HepG2 (cell line): ENCODE measurements at regions of chr12 and their contacts with region 1.

Region 1: GRCh38 chr12:6451348-6452244 is at the start of gene TAPBPL:
- DNase-seq: peak; percentile 89
- ATAC-seq: peak; percentile 94
- H3K4me3 ChIP-seq: peak within 1 kb of the TSS; percentile 87 to 94 (median 90)
- H3K27ac ChIP-seq: peak within 1 kb of the TSS; percentile 90
- H3K4me1 ChIP-seq: peaks cover 34% of the 10 kb centered on the region
- H3K27me3 ChIP-seq: no peaks in the 10 kb centered on the region; a peak in 1 of 5 replicates
- CTCF ChIP-seq: no peak
- EP300 ChIP-seq: no peak
- POLR2A ChIP-seq: peak; percentile 68 to 79
- RAD21 ChIP-seq: no peak
- total RNA-seq, gene TAPBPL: 3.2 and 10.0 TPM in 2 replicates

Region 2: GRCh38 chr12:6440391-6440790 is 11.2 kb before region 1 on chr12:
- CTCF ChIA-PET with region 1: no interaction called
- POLR2A ChIA-PET with region 1: interaction called, 13 read pairs
- in situ Hi-C with region 1: no loop called
- intact Hi-C with region 1: no loop called
- DNase-seq: no peak
- ATAC-seq: no peak
- H3K4me3 ChIP-seq: no peak overlapping the region
- H3K27ac ChIP-seq: no peak overlapping the region
- H3K4me1 ChIP-seq: peaks cover 15% of the 10 kb centered on the region
- H3K27me3 ChIP-seq: no peaks in the 10 kb centered on the region; a peak in 2 of 5 replicates
- CTCF ChIP-seq: no peak
- EP300 ChIP-seq: no peak
- POLR2A ChIP-seq: no peak
- RAD21 ChIP-seq: no peak

Region 3: GRCh38 chr12:6461401-6462233 is 10.0 kb after region 1 on chr12:
- CTCF ChIA-PET with region 1: no interaction called
- POLR2A ChIA-PET with region 1: interaction called, 12 read pairs
- in situ Hi-C with region 1: no loop called
- intact Hi-C with region 1: no loop called
- DNase-seq: no peak
- ATAC-seq: no peak
- H3K4me3 ChIP-seq: no peak overlapping the region
- H3K27ac ChIP-seq: no peak overlapping the region
- H3K4me1 ChIP-seq: 0 out of 2 replicates have a peak, but pooled peaks cover 5% of the 10 kb centered on the region
- H3K27me3 ChIP-seq: no peaks in the 10 kb centered on the region
- CTCF ChIP-seq: no peak
- EP300 ChIP-seq: no peak
- POLR2A ChIP-seq: no peak
- RAD21 ChIP-seq: no peak

Region 4: GRCh38 chr12:6493497-6494257 is 42.1 kb after region 1 on chr12 and contains the start of gene NCAPD2:
- CTCF ChIA-PET with region 1: no interaction called
- POLR2A ChIA-PET with region 1: interaction called, 16 read pairs
- in situ Hi-C with region 1: no loop called
- intact Hi-C with region 1: no loop called
- DNase-seq: peak; percentile 94
- ATAC-seq: peak; percentile 94
- H3K4me3 ChIP-seq: peak within 1 kb of the TSS; percentile 80 to 83 (median 81)
- H3K27ac ChIP-seq: peak within 1 kb of the TSS; percentile 98
- H3K4me1 ChIP-seq: peaks cover 38% of the 10 kb centered on the region
- H3K27me3 ChIP-seq: no peaks in the 10 kb centered on the region; a peak in 1 of 5 replicates
- CTCF ChIP-seq: no peak; the same call in 1 of the 2 replicates
- EP300 ChIP-seq: no peak
- POLR2A ChIP-seq: peak; percentile 5 to 68; a peak in 3 of 4 replicates
- RAD21 ChIP-seq: no peak
- total RNA-seq, gene NCAPD2: 65.6 and 100 TPM in 2 replicates

Region 5: GRCh38 chr12:6540181-6540877 is 88.7 kb after region 1 on chr12:
- CTCF ChIA-PET with region 1: no interaction called
- POLR2A ChIA-PET with region 1: interaction called, 17 read pairs
- in situ Hi-C with region 1: no loop called
- intact Hi-C with region 1: no loop called
- DNase-seq: no peak
- ATAC-seq: peak; percentile 2
- H3K4me3 ChIP-seq: no peak overlapping the region
- H3K27ac ChIP-seq: no peak overlapping the region
- H3K4me1 ChIP-seq: peaks cover 53% of the 10 kb centered on the region
- H3K27me3 ChIP-seq: no peaks in the 10 kb centered on the region; a peak in 1 of 5 replicates
- CTCF ChIP-seq: no peak
- EP300 ChIP-seq: no peak
- POLR2A ChIP-seq: no peak
- RAD21 ChIP-seq: no peak